ENCODE measurements at regions of chr19 and their contacts with region 1.

Region 1: GRCh38 chr19:16714702-16715287 is 4.9 kb upstream of the NWD1 start:
- DNase-seq: peak; percentile 56 to 86
- ATAC-seq: peak; percentile 77
- H3K4me3 ChIP-seq: no peak overlapping the region
- H3K27ac ChIP-seq: no peak overlapping the region
- H3K4me1 ChIP-seq: no peaks in the 10 kb centered on the region
- H3K27me3 ChIP-seq: no peaks in the 10 kb centered on the region

Region 2: GRCh38 chr19:16751733-16752132 is 36.9 kb after region 1 on chr19:
- intact Hi-C with region 1: no loop called
- DNase-seq: no peak
- ATAC-seq: no peak
- H3K4me3 ChIP-seq: no peak overlapping the region
- H3K27ac ChIP-seq: no peak overlapping the region
- H3K4me1 ChIP-seq: no peaks in the 10 kb centered on the region
- H3K27me3 ChIP-seq: no peaks in the 10 kb centered on the region

Region 3: DNA sequence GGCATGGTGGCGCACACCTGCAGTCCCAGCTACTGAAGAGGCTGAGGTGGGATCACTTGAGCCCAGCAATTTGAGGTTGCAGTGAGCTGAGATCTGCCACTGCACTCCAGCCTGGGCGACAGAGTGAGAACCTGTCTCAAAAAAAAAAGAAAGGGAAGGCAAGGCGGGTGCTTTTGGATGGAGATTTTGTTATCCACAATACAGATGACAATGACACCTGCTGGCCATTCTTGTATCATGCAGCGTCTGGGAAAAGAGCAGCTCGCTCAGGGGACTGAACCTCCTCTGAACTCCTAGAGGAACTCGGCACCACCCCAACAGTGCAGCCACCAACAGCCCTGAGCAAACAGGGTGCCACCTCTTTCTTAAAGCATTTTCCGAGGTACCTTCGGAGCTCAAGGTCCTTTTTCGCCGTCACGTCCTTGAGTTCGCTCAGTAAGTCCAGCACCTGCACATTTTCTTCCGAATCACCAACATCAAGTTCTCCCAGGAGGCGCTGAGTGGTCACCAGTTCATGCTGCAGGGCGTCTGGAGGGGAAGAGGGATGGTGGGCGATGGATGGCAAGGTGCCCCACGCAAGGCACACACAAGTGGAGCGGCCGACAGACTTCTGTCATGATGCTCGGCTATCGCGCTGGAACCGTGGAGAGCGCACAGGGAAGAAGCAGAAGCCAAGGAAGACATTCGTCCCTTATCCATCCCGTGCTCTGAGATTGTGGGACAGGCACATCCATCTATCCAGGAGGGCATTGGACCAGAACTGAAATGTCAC is 337.8 kb after region 1 on chr19:
- intact Hi-C with region 1: loop called in 1 of 2 experiments (anchors 5 kb)
- DNase-seq: no peak
- ATAC-seq: peak; percentile 66
- H3K4me3 ChIP-seq: no peak overlapping the region
- H3K27ac ChIP-seq: no peak overlapping the region
- H3K4me1 ChIP-seq: no peaks in the 10 kb centered on the region
- H3K27me3 ChIP-seq: no peaks in the 10 kb centered on the region